Pancreas (tissue), 10 donors: ENCODE measurements at regions of chr7 and their contacts with region 1.

Region 1: DNA sequence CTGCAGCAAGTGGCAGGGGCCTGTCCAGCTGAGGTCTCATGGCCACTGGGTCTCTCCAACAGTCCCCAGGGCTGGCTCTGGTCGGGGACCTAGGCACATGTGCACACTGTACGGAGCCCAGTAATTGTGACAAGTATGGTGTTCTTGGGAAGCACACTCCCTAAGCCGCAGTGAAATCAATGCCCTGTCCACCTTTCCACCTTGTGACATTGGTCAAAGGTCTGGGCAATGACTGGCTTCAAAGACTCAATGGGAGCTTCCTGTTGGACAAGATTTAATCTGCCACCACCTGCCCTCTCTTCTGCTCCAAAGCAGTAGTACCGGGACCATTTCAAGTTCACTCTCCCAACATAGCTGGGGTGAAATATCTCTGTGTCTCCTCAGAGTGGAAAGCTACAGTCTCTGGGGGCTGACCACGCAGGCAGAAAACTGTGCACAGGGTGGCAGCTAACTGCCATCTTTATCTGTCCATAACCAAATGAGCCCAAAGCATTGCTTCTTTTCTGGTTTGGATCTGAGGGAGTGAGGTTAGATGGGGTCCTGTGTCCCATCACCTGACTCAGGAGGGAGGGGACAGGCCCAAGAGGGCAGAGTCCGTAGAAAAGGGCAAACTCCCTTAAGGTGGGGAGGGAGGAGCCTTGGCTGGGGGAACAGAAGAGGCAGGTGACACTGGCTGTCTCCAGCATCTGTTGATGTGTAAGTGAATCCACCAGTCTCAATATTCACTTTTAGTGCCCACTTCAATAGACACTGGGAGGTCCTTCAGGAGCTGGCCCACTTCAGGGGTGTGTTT is 307.7 kb downstream of the TNS3 start:
- DNase-seq: no peak
- ATAC-seq: peak in 1 of 4 donors; percentile 17
- H3K4me3 ChIP-seq: no peak overlapping the region
- H3K27ac ChIP-seq: no peak overlapping the region
- H3K4me1 ChIP-seq: no peaks in the 10 kb centered on the region
- H3K27me3 ChIP-seq: no peaks in the 10 kb centered on the region
- CTCF ChIP-seq: no peak

Region 2: DNA sequence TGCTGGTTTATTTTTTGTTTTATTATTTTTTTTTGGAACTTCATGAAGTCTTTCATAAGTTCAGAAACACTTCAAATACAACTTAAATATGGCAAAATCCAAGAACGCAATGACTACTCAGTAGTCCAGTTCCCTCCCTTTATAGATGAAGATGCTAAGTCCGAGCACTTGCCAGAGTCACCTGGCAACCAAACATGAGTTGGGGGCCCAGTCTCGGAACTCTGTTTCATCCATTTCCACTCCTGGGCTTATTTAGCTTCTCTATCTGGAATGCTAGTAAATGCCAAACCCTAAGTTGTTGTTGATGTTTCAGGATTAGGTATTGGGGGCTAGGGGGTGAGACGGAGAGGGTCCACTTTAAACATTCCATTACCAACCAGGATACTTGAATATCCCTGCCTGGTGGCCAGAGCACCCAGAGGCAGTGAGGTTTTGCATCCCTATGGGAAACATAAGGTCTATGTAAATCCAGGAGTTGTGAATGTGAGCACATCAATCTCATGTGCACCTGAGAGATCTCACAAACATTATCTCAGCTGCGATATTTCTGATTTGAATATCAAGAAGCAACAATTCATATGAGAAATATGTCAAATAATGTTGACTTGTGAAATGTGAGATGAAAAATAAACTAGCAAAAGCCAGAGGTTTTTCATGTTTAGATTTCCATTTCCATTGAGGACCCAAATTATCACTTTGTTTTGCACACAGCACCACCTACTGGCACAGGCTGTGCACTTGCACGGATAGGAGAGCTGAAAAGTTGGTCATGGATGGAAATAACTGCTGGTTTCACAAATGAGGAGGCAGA is 544.8 kb after region 1 on chr7:
- intact Hi-C with region 1: loop called in 2 of 3 experiments (anchors 5 to 10 kb)
- DNase-seq: peak in 5 of 6 donors; percentile 48 to 78 (median 61)
- ATAC-seq: peak; percentile 63 to 95 (median 93)
- H3K4me3 ChIP-seq: no peak overlapping the region
- H3K27ac ChIP-seq: no peak overlapping the region
- H3K4me1 ChIP-seq: no peaks in the 10 kb centered on the region
- H3K27me3 ChIP-seq: no peaks in the 10 kb centered on the region
- CTCF ChIP-seq: peak; percentile 65 to 88 (median 84)